Mammary epithelial cell (primary cell): ENCODE measurements at regions of chr10 and their contacts with region 1.

Region 1: DNA sequence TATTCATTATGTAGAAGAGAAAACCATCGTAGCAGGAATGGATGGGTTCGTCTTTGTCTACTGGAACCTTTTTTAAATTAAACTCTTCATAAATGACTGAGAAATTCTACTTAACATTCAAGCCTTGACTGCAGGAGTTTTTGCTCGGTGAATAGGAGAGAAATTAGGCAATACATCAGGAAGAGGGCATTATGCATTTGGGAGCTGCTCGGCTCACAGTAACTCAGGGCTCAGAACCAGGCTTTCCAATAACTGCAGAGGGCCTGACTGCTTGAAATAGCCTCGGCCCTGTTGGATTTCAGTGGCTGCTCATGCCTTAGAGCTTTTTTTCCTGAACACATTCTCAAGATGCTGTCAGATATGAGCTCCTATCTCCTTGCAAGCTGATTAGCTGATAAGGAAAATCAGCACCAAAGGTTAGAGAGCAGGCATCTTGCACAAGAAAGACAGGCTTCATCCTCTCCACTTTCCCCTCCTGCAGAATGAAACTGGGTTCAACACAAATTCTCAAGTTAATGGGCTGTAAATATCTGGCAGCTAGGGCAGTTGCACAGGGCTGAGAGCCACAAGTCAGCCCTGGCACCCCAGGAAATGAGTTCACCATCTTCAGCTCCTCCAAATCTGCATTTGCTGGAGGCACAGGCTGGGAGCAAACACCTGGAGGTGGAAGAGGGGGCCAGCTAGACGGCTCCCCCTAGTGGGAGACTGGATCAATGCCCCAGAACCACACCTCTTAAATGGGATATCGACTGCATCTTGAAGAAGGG is 24.3 kb downstream of the TECTB start:
- DNase-seq: peak; percentile 38
- H3K4me3 ChIP-seq: no peak overlapping the region
- H3K27ac ChIP-seq: no peak overlapping the region
- H3K4me1 ChIP-seq: no peaks in the 10 kb centered on the region
- H3K27me3 ChIP-seq: peaks cover 2% of the 10 kb centered on the region
- CTCF ChIP-seq: peak; percentile 88 to 96

Region 2: DNA sequence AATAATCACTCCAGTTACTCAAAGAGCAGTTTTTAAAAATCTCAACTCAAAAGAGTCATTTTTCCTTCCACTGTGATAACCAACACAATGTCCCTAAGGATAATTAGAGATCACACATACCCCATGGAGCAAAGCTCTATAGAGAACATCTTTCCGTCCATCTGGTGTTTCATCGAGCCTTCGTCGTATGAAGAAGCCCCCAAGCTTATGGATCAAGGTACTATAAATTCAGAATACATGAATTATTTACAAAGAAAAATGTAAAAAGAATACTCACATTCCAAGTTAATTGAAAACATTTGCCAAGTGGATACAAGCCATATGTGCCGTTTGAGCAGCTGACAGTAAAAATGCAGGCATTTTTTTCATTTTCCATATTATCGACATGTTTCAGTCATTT is 138.8 kb before region 1 on chr10:
- CTCF ChIA-PET with region 1: no interaction called
- dilution Hi-C with region 1: no loop called
- in situ Hi-C with region 1: no loop called
- intact Hi-C with region 1: loop called (anchors 5 kb)
- DNase-seq: no peak
- H3K4me3 ChIP-seq: no peak overlapping the region
- H3K27ac ChIP-seq: no peak overlapping the region
- H3K4me1 ChIP-seq: no peaks in the 10 kb centered on the region
- H3K27me3 ChIP-seq: no peaks in the 10 kb centered on the region
- CTCF ChIP-seq: no peak

Region 3: GRCh38 chr10:112183329-112184051 is 124.1 kb before region 1 on chr10 and contains the start of gene GPAM:
- CTCF ChIA-PET with region 1: no interaction called
- dilution Hi-C with region 1: no loop called
- in situ Hi-C with region 1: loop called in 1 of 2 experiments (anchors 5 kb)
- intact Hi-C with region 1: loop called (anchors 1 kb)
- DNase-seq: peak; percentile 89
- H3K4me3 ChIP-seq: peak within 1 kb of the TSS; percentile 76 to 92 (median 82)
- H3K27ac ChIP-seq: peak within 1 kb of the TSS; percentile 81
- H3K4me1 ChIP-seq: peaks cover 11% of the 10 kb centered on the region
- H3K27me3 ChIP-seq: no peaks in the 10 kb centered on the region
- CTCF ChIP-seq: no peak
- total RNA-seq, gene GPAM: 9.5 to 17.5 TPM